ENCODE measurements at regions of chr15 and their contacts with region 1.

Region 1: DNA sequence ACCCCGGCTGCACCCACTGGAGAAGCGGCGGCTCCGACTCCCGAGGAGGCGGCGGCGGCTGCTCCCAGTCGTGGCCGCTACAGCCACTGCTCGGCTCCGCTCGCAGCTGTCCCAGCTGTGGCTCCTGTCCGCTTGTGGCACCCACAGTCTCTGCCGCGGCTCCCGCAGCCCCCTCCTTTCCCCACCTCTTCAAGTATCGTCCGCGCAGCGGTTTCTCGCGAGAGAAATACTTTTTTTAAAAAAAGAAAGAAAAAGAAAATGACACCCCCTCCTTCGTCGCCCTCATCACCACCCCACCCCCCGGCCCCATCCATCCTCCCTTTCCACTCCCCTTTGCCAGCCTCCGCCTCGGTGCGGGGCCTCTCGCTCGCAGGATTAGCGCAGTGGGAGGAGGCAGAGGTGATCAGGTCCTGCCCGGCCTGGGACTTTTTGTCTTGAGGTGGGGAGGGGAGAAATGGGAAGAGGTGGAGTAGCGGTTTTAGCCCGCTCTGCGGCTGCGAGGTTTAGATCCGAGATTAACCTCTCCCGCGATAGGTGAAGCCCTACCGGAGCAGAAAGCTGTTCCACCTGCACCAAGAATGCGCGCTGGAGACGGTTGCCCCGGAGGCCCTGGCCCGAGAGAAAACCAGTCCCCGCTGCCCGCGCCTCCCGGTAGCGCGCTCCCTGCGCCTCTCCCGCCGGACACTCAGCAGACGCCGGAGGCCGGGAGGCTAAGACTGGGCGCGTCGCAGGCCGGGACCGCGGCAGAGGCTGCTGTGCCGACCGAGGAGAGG is at the start of gene FBN1:
- DNase-seq: peak; percentile 59
- H3K4me3 Mint-ChIP-seq: peak within 1 kb of the TSS; percentile 79
- H3K27ac Mint-ChIP-seq: no peak within 1 kb of the TSS
- H3K4me1 Mint-ChIP-seq: peaks cover 20% of the 10 kb centered on the region
- H3K27me3 Mint-ChIP-seq: no peaks in the 10 kb centered on the region
- CTCF ChIP-seq: no peak
- total RNA-seq, gene FBN1: 14.3 and 24.2 TPM in 2 replicates

Region 2: GRCh38 chr15:48358229-48358641 is 287.5 kb before region 1 on chr15:
- CTCF ChIA-PET with region 1: interaction called, 49 read pairs
- POLR2A ChIA-PET with region 1: interaction called, 5 read pairs
- intact Hi-C with region 1: loop called (anchors 1 kb)
- DNase-seq: peak; percentile 34
- H3K4me3 Mint-ChIP-seq: no peak overlapping the region
- H3K27ac Mint-ChIP-seq: no peak overlapping the region
- H3K4me1 Mint-ChIP-seq: peaks cover 19% of the 10 kb centered on the region
- H3K27me3 Mint-ChIP-seq: no peaks in the 10 kb centered on the region
- CTCF ChIP-seq: peak; percentile 75

Region 3: DNA sequence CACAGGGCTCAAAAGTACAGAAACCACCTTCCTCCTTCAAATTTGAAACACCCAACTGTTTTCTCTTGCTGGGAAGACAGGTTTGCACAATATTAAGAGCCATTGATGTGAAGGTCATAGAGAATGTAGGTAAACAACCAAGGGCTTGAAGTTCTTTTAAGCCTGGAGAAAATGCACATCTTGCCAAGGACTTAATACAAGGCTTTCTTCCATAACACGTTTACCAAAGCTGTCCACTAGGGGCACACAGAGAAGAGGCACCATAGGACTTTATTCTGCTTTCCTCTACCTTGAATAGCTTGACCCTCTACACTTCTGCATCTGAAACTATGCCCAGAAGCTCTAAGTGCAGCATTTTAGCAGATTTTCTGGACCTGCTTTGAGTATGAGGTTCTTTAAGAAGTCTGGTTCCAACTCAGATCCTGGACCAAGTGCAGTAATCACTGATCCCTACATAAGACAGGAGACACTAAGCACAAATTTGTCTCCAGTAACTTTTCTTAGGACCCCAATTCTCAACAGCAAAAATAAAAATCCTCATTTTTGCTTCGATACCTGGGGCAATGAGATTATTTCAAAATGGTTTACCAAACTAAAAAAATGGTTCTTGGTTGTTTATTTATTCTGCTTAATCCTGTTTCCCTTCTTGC is 138.2 kb before region 1 on chr15:
- CTCF ChIA-PET with region 1: interaction called, 3 read pairs
- POLR2A ChIA-PET with region 1: no interaction called
- intact Hi-C with region 1: loop called (anchors 1 kb)
- DNase-seq: peak; percentile 63
- H3K4me3 Mint-ChIP-seq: no peak overlapping the region
- H3K27ac Mint-ChIP-seq: peak overlapping the region; percentile 66
- H3K4me1 Mint-ChIP-seq: no peaks in the 10 kb centered on the region
- H3K27me3 Mint-ChIP-seq: no peaks in the 10 kb centered on the region
- CTCF ChIP-seq: peak; percentile 33

Region 4: DNA sequence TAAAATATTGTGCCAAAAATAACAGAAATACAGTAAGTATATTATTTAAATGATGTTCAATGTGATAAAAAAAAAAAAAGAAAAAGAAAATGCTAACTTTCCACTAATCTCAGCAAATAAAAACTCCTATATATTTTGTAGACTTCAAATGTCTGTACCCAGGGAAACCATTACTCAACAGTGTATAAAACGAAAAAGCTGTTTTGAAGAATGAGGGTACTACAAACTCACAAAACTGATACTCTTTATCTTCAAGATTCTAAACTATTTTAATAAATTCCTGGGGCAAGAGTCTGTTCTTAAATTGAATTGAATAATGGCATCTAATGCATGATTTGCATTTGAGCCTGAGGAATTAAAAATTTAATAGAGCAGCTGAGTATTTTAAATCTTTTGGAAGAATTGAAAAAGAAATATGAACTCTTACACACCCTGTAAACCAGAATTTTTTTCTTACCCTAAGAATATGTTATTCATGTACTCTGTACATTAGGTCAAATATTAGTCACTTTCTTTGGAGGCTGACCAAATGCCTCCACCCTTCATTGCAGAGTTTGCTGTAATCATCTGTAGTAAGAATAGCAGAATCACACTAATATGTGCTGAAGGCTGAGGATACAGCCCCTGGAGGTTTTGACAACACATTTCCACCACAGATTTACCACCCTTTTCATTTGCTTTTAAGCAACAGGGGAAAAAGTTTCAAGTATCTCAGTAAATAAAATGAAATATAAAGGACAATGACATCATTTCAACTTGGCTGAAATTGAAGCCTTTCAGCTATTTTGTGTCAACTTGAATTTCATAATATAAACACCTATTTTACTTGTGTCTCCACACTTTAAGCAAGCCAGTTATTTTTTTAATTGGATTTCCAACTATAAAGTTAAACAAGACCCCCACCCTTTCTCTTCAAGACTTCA is 79.9 kb before region 1 on chr15:
- CTCF ChIA-PET with region 1: interaction called, 3 read pairs
- POLR2A ChIA-PET with region 1: no interaction called
- intact Hi-C with region 1: loop called (anchors 1 kb)
- DNase-seq: peak; percentile 85
- H3K4me3 Mint-ChIP-seq: peak overlapping the region; percentile 14
- H3K27ac Mint-ChIP-seq: peak overlapping the region; percentile 94
- H3K4me1 Mint-ChIP-seq: peaks cover 39% of the 10 kb centered on the region
- H3K27me3 Mint-ChIP-seq: no peaks in the 10 kb centered on the region
- CTCF ChIP-seq: no peak

Region 5: GRCh38 chr15:48627260-48627960 is 18.3 kb before region 1 on chr15:
- CTCF ChIA-PET with region 1: interaction called, 3 read pairs
- POLR2A ChIA-PET with region 1: interaction called, 13 read pairs
- intact Hi-C with region 1: no loop called
- DNase-seq: peak; percentile 79
- H3K4me3 Mint-ChIP-seq: peak overlapping the region; percentile 55
- H3K27ac Mint-ChIP-seq: peak overlapping the region; percentile 94
- H3K4me1 Mint-ChIP-seq: peaks cover 5% of the 10 kb centered on the region
- H3K27me3 Mint-ChIP-seq: no peaks in the 10 kb centered on the region
- CTCF ChIP-seq: no peak

Region 6: GRCh38 chr15:48800811-48801455 is 155.2 kb after region 1 on chr15:
- CTCF ChIA-PET with region 1: interaction called, 12 read pairs
- POLR2A ChIA-PET with region 1: interaction called, 4 read pairs
- intact Hi-C with region 1: loop called (anchors 1 kb)
- DNase-seq: peak; percentile 26
- H3K4me3 Mint-ChIP-seq: no peak overlapping the region
- H3K27ac Mint-ChIP-seq: peak overlapping the region; percentile 42
- H3K4me1 Mint-ChIP-seq: peaks cover 14% of the 10 kb centered on the region
- H3K27me3 Mint-ChIP-seq: no peaks in the 10 kb centered on the region
- CTCF ChIP-seq: peak; percentile 42

Region 7: GRCh38 chr15:48855501-48856440 is 210.0 kb after region 1 on chr15:
- CTCF ChIA-PET with region 1: no interaction called
- POLR2A ChIA-PET with region 1: no interaction called
- intact Hi-C with region 1: loop called (anchors 5 kb)
- DNase-seq: peak; percentile 55
- H3K4me3 Mint-ChIP-seq: no peak overlapping the region
- H3K27ac Mint-ChIP-seq: peak overlapping the region; percentile 1
- H3K4me1 Mint-ChIP-seq: peaks cover 21% of the 10 kb centered on the region
- H3K27me3 Mint-ChIP-seq: no peaks in the 10 kb centered on the region
- CTCF ChIP-seq: peak; percentile 53

Measured in MCF 10A (cell line).